Esophagus muscularis mucosa (tissue), 4 donors: ENCODE measurements at regions of chr13 and their contacts with region 1.

Region 1: GRCh38 chr13:24220086-24220703 is 59.7 kb downstream of the SPATA13 start:
- DNase-seq: no peak
- H3K4me3 ChIP-seq: no peak overlapping the region
- H3K27ac ChIP-seq: peak overlapping the region in 1 of 4 donors; percentile 8
- H3K4me1 ChIP-seq: peaks cover 20 to 41% (median 30%) of the 10 kb centered on the region in 4 donors
- H3K27me3 ChIP-seq: no peaks in the 10 kb centered on the region
- CTCF ChIP-seq: peak; percentile 71 to 83 (median 82)
- EP300 ChIP-seq: no peak
- POLR2A ChIP-seq: no peak

Region 2: DNA sequence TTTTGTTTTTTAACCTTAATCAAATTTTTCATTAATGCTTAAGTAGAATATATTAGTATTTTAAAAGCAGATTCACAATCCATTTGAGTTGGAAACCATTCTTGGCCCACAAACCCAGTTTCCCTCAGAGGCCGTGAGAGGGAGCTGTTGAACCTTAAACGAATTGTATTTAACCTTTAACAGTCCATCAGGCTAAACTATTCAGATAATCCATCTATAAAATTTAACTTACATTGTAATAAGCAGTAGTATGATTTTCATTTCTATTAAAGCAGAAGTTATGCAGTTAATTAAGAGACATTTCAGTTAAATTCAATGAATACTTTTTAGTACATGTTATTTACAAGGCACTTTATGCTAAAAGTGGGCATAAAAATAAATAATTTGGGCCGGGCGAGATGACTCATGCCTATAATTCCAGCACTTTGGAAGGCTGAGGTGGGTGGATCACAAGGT is 199.8 kb before region 1 on chr13:
- intact Hi-C with region 1: loop called (anchors 1 kb)
- DNase-seq: no peak
- H3K4me3 ChIP-seq: no peak overlapping the region
- H3K27ac ChIP-seq: no peak overlapping the region
- H3K4me1 ChIP-seq: peaks cover 0 to 3% (median 0%) of the 10 kb centered on the region in 4 donors
- H3K27me3 ChIP-seq: no peaks in the 10 kb centered on the region
- CTCF ChIP-seq: peak; percentile 76 to 83 (median 78)
- EP300 ChIP-seq: no peak
- POLR2A ChIP-seq: no peak